H1 (cell line): ENCODE measurements at regions of chr22 and their contacts with region 1.

Region 1: GRCh38 chr22:50148991-50149721 is 21.4 kb upstream of the PANX2 start:
- DNase-seq: peak; percentile 57 to 82
- H3K4me3 ChIP-seq: no peak overlapping the region
- H3K27ac ChIP-seq: no peak overlapping the region
- H3K4me1 ChIP-seq: peaks cover 0 to 4% (median 0%) of the 10 kb centered on the region in 4 experiments; a peak in 3 of 7 replicates
- H3K27me3 ChIP-seq: peaks cover 0 to 8% (median 2%) of the 10 kb centered on the region in 4 experiments; a peak in 2 of 7 replicates
- CTCF ChIP-seq: peak; percentile 90 to 94 (median 94)
- EP300 ChIP-seq: no peak
- POLR2A ChIP-seq: no peak
- RAD21 ChIP-seq: peak; percentile 89 to 91

Region 2: GRCh38 chr22:49930739-49931412 is 218.3 kb before region 1 on chr22:
- CTCF ChIA-PET with region 1: interaction called, 11 read pairs
- POLR2A ChIA-PET with region 1: no interaction called
- DNase-seq: no peak
- H3K4me3 ChIP-seq: no peak overlapping the region
- H3K27ac ChIP-seq: no peak overlapping the region
- H3K4me1 ChIP-seq: peaks cover 0 to 8% (median 1%) of the 10 kb centered on the region in 4 experiments; a peak in 2 of 7 replicates
- H3K27me3 ChIP-seq: peaks cover 0 to 12% (median 10%) of the 10 kb centered on the region in 4 experiments; a peak in 6 of 7 replicates
- CTCF ChIP-seq: peak in 2 of 3 experiments; percentile 61 to 62; a peak in 3 of 4 replicates
- EP300 ChIP-seq: no peak
- POLR2A ChIP-seq: no peak
- RAD21 ChIP-seq: peak; percentile 64 to 73

Region 3: GRCh38 chr22:50018608-50019285 is 130.4 kb before region 1 on chr22:
- CTCF ChIA-PET with region 1: no interaction called
- POLR2A ChIA-PET with region 1: no interaction called
- DNase-seq: no peak
- H3K4me3 ChIP-seq: no peak overlapping the region
- H3K27ac ChIP-seq: no peak overlapping the region
- H3K4me1 ChIP-seq: peaks cover 0 to 11% (median 5%) of the 10 kb centered on the region in 4 experiments; a peak in 5 of 7 replicates
- H3K27me3 ChIP-seq: peaks cover 18 to 26% (median 22%) of the 10 kb centered on the region in 4 experiments
- CTCF ChIP-seq: no peak
- EP300 ChIP-seq: no peak
- POLR2A ChIP-seq: no peak
- RAD21 ChIP-seq: no peak

Region 4: GRCh38 chr22:50165430-50166123 is 16.4 kb after region 1 on chr22:
- CTCF ChIA-PET with region 1: interaction called, 12 read pairs
- POLR2A ChIA-PET with region 1: interaction called, 3 read pairs
- DNase-seq: no peak
- H3K4me3 ChIP-seq: no peak overlapping the region
- H3K27ac ChIP-seq: no peak overlapping the region
- H3K4me1 ChIP-seq: peaks cover 0 to 8% (median 2%) of the 10 kb centered on the region in 4 experiments; a peak in 2 of 7 replicates
- H3K27me3 ChIP-seq: peaks cover 4 to 12% (median 7%) of the 10 kb centered on the region in 4 experiments
- CTCF ChIP-seq: no peak
- EP300 ChIP-seq: no peak
- POLR2A ChIP-seq: no peak
- RAD21 ChIP-seq: no peak

Region 5: GRCh38 chr22:50190182-50190940 is 41.2 kb after region 1 on chr22:
- CTCF ChIA-PET with region 1: interaction called, 21 read pairs
- POLR2A ChIA-PET with region 1: interaction called, 5 read pairs
- DNase-seq: peak; percentile 44 to 82
- H3K4me3 ChIP-seq: peak overlapping the region; percentile 1 to 57 (median 26); a peak in 7 of 8 replicates
- H3K27ac ChIP-seq: no peak overlapping the region; the same call in 1 of the 2 replicates
- H3K4me1 ChIP-seq: peaks cover 2 to 21% (median 10%) of the 10 kb centered on the region in 4 experiments; a peak in 6 of 7 replicates
- H3K27me3 ChIP-seq: 0 out of 7 replicates have a peak, but pooled peaks cover 0 to under 1% (median 0%) of the 10 kb centered on the region in 4 experiments
- CTCF ChIP-seq: peak; percentile 38 to 75 (median 51); a peak in 3 of 4 replicates
- EP300 ChIP-seq: no peak
- POLR2A ChIP-seq: no peak
- RAD21 ChIP-seq: peak in 1 of 2 experiments; percentile 21; a peak in 3 of 4 replicates

Region 6: DNA sequence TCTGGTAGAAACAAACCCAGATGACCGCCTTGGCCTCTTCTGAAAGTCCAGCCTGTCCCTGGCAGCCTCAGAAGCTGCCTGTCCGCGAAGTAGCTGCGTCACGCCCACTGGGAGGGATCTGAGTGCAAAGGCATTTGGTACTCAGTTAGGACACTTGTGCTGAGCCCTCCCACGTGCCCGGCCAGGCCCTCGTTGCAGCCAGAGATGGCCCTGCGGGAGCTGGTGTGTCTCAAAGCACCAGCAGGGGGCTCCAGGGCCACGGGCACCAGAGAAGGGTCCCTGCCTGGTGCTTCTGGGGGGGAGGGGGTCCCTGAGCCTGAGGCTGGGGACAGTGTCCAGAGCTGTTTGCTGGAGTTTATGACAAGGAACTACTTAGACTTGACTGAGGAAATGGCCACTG is 57.4 kb after region 1 on chr22:
- CTCF ChIA-PET with region 1: interaction called, 83 read pairs
- POLR2A ChIA-PET with region 1: interaction called, 3 read pairs
- DNase-seq: peak; percentile 49 to 76
- H3K4me3 ChIP-seq: no peak overlapping the region
- H3K27ac ChIP-seq: no peak overlapping the region
- H3K4me1 ChIP-seq: peaks cover 0 to 6% (median 5%) of the 10 kb centered on the region in 4 experiments; a peak in 6 of 7 replicates
- H3K27me3 ChIP-seq: no peaks in the 10 kb centered on the region
- CTCF ChIP-seq: peak; percentile 52 to 66 (median 60)
- EP300 ChIP-seq: no peak
- POLR2A ChIP-seq: no peak
- RAD21 ChIP-seq: peak; percentile 18 to 43; a peak in 2 of 4 replicates

Region 7: DNA sequence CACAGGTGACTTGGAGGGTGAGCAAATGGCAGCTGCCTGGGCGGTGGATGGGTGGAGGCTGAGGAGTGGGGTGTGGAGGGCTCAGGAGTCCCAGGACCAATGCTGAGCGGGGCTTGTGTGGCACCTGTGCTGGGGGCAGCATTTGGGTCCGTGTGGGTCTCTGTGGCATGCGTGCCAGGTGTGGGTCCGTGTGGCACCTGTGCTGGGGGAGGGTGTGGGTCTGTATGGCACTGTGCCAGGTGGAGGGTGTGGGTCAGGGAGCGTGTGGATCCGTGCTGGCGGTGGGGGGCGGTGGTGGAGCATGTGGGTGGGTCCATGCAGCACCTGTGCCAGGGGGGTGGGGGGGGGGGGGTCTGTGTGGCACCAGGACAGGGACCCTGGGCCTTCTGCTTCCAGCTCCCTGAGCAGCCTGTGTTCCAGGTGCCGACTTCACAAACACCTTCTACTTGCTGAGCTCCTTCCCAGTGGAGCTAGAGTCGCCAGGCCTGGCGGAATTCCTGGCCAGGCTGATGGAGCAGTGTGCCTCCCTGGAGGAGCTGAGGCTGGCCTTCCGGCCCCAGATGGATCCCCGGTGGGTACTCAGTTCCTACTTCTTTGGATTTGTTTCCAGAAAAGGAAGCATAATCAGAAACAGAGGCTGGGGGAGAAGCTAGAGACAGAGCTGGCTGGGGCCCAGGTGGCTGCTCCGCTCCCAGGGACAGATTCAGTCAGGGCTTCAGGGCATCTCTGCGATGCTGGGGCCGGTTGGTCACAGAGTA is 66.3 kb after region 1 on chr22:
- CTCF ChIA-PET with region 1: interaction called, 20 read pairs
- POLR2A ChIA-PET with region 1: interaction called, 4 read pairs
- DNase-seq: no peak
- H3K4me3 ChIP-seq: no peak overlapping the region
- H3K27ac ChIP-seq: no peak overlapping the region
- H3K4me1 ChIP-seq: peaks cover 0 to 11% (median 2%) of the 10 kb centered on the region in 4 experiments; a peak in 3 of 7 replicates
- H3K27me3 ChIP-seq: no peaks in the 10 kb centered on the region
- CTCF ChIP-seq: no peak
- EP300 ChIP-seq: no peak
- POLR2A ChIP-seq: no peak
- RAD21 ChIP-seq: no peak

Region 8: DNA sequence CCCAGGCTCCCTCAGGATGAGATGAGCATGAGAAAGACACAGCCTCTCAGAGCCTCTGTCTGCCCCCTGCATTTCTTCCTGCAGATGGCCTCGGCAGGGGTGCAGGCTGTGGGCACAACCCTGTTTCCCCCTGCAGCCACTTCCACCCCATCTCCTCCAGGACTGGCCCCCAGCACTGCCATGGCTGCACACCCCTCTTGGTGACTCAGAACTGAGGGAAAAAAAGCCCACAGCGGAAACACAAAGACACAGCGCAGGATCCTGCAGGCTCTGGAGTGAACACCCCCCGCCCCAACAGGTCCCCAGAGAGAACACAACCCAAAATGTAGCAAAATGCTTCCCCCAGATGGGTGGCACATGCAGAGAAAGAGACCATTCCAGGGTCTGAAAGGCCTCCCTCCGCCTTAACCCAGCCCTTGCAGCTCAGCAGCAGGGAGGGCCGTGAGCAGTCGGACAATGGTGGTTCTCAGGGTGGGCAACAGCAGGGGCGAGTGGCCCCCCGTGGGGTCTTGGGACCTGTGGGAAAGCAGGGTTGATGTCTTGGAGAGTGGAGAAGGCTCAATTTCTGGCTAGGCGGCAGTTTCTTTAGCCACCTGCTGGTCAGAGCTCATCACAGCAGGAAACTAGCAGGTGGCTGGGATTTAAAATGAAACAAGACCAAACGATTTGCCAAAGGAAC is 87.7 kb after region 1 on chr22:
- CTCF ChIA-PET with region 1: interaction called, 11 read pairs
- POLR2A ChIA-PET with region 1: no interaction called
- DNase-seq: peak in 1 of 2 experiments; percentile 51
- H3K4me3 ChIP-seq: no peak overlapping the region
- H3K27ac ChIP-seq: no peak overlapping the region
- H3K4me1 ChIP-seq: peaks cover 0 to 6% (median 1%) of the 10 kb centered on the region in 4 experiments; a peak in 4 of 7 replicates
- H3K27me3 ChIP-seq: no peaks in the 10 kb centered on the region
- CTCF ChIP-seq: peak; percentile 44 to 68 (median 50)
- EP300 ChIP-seq: no peak
- POLR2A ChIP-seq: no peak
- RAD21 ChIP-seq: peak; percentile 13 to 28; a peak in 3 of 4 replicates

Region 9: GRCh38 chr22:50260801-50261614 is 111.9 kb after region 1 on chr22:
- CTCF ChIA-PET with region 1: no interaction called
- POLR2A ChIA-PET with region 1: no interaction called
- DNase-seq: peak in 1 of 2 experiments; percentile 72
- H3K4me3 ChIP-seq: peak overlapping the region; percentile 35 to 73 (median 48)
- H3K27ac ChIP-seq: no peak overlapping the region
- H3K4me1 ChIP-seq: peaks cover 0 to 20% (median 10%) of the 10 kb centered on the region in 4 experiments; a peak in 6 of 7 replicates
- H3K27me3 ChIP-seq: peaks cover 1 to 22% (median 18%) of the 10 kb centered on the region in 4 experiments; a peak in 6 of 7 replicates
- CTCF ChIP-seq: no peak
- EP300 ChIP-seq: no peak
- POLR2A ChIP-seq: no peak
- RAD21 ChIP-seq: no peak